Naive thymus-derived CD4-positive, alpha-beta T cell (primary cell): ENCODE measurements at regions of chr10 and their contacts with region 1.

Region 1: GRCh38 chr10:27558612-27559020 is 54.5 kb downstream of the RAB18 start:
- DNase-seq: peak in 3 of 9 donors; percentile 10 to 25 (median 15)
- ATAC-seq: peak; percentile 63
- H3K4me3 ChIP-seq: no peak overlapping the region
- H3K4me3 Mint-ChIP-seq: no peak overlapping the region
- H3K27ac ChIP-seq: no peak overlapping the region
- H3K27ac Mint-ChIP-seq: peak overlapping the region in 1 of 9 donors; percentile 36
- H3K4me1 ChIP-seq: peaks cover 0 to under 1% of the 10 kb centered on the region in 2 donors
- H3K4me1 Mint-ChIP-seq: peaks cover 0 to 4% (median 0%) of the 10 kb centered on the region in 7 donors
- H3K27me3 ChIP-seq: no peaks in the 10 kb centered on the region
- H3K27me3 Mint-ChIP-seq: peaks cover 0 to 16% (median 0%) of the 10 kb centered on the region in 5 donors

Region 2: DNA sequence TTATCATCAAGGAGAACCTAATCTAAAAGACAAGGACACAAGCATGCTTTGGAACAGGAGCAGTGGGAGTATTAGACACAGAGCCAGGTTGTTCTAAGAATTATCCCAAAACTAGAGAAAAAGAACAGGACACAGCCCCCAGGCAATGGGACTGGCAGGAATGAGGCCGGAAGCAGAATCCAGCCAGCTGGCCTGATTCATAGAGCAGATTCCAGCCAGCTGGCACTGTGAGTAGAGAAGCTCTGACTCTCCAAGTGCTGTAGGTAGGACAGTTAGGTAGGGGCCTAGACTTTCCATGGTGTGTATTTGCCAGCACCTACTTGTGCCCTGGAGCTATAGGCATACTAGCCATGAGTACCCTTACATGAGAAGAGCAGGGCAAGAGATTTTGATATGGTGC is 67.8 kb before region 1 on chr10:
- CTCF ChIA-PET with region 1: no interaction called
- POLR2A ChIA-PET with region 1: no interaction called
- intact Hi-C with region 1: no loop called
- DNase-seq: no peak
- ATAC-seq: no peak
- H3K4me3 ChIP-seq: no peak overlapping the region
- H3K4me3 Mint-ChIP-seq: no peak overlapping the region
- H3K27ac ChIP-seq: no peak overlapping the region
- H3K27ac Mint-ChIP-seq: no peak overlapping the region
- H3K4me1 ChIP-seq: no peaks in the 10 kb centered on the region
- H3K4me1 Mint-ChIP-seq: peaks cover 0 to 3% (median 0%) of the 10 kb centered on the region in 7 donors
- H3K27me3 ChIP-seq: peaks cover 0 to 3% of the 10 kb centered on the region in 2 donors
- H3K27me3 Mint-ChIP-seq: peaks cover 21 to 65% (median 32%) of the 10 kb centered on the region in 5 donors

Region 3: DNA sequence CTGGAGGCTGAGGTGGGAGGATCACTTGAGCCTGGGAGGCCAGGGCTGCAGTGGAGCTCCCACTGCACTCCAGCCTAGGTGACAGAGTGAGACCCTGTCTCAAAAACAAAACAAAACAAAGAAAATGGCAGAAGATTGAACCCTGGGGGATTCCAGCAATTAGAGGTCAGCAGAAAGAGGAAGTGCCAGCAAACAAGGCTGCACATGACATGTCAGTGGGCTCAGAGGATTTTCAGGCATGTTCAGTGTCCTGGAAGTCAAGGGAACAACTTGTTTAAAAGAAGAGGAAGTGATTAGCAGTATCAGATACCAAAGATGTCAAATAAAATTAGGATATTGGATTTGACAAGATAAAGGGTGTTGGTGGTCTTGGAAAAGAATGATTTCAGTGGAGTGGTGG is 22.2 kb before region 1 on chr10:
- CTCF ChIA-PET with region 1: no interaction called
- POLR2A ChIA-PET with region 1: no interaction called
- intact Hi-C with region 1: loop called in 1 of 2 experiments (anchors 2 kb)
- DNase-seq: no peak
- ATAC-seq: no peak
- H3K4me3 ChIP-seq: no peak overlapping the region
- H3K4me3 Mint-ChIP-seq: no peak overlapping the region
- H3K27ac ChIP-seq: no peak overlapping the region
- H3K27ac Mint-ChIP-seq: no peak overlapping the region
- H3K4me1 ChIP-seq: peaks cover 0 to 7% of the 10 kb centered on the region in 2 donors
- H3K4me1 Mint-ChIP-seq: peaks cover 4 to 26% (median 15%) of the 10 kb centered on the region in 7 donors
- H3K27me3 ChIP-seq: no peaks in the 10 kb centered on the region
- H3K27me3 Mint-ChIP-seq: no peaks in the 10 kb centered on the region

Region 4: DNA sequence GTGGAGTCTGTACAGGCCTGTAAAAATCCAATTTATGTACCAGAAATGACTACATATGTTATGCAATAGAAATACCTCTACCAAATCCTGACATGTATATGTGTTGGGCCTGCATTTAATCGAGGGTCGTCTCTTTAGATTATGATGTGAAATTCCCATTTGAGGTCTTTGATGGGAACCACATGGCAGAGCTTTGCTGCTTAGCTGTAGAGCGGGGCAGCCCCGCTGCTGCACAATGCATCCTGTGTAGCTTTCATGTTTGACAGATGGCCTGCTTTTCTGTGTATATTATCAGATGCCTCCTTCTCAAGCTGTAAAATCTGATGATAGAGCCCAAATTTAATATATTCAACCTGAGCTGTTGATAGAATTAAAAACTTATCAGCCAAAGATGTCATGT is 11.3 kb after region 1 on chr10:
- CTCF ChIA-PET with region 1: no interaction called
- POLR2A ChIA-PET with region 1: no interaction called
- intact Hi-C with region 1: no loop called
- DNase-seq: no peak
- ATAC-seq: no peak
- H3K4me3 ChIP-seq: no peak overlapping the region
- H3K4me3 Mint-ChIP-seq: no peak overlapping the region
- H3K27ac ChIP-seq: no peak overlapping the region
- H3K27ac Mint-ChIP-seq: peak overlapping the region in 1 of 9 donors; percentile 3
- H3K4me1 ChIP-seq: peaks cover 0 to 19% of the 10 kb centered on the region in 2 donors
- H3K4me1 Mint-ChIP-seq: peaks cover 4 to 28% (median 15%) of the 10 kb centered on the region in 7 donors
- H3K27me3 ChIP-seq: no peaks in the 10 kb centered on the region
- H3K27me3 Mint-ChIP-seq: peaks cover 0 to 2% (median 0%) of the 10 kb centered on the region in 5 donors

Region 5: GRCh38 chr10:27637362-27637964 is 78.8 kb after region 1 on chr10:
- CTCF ChIA-PET with region 1: no interaction called
- POLR2A ChIA-PET with region 1: no interaction called
- intact Hi-C with region 1: no loop called
- DNase-seq: no peak
- ATAC-seq: no peak
- H3K4me3 ChIP-seq: no peak overlapping the region
- H3K4me3 Mint-ChIP-seq: no peak overlapping the region
- H3K27ac ChIP-seq: no peak overlapping the region
- H3K27ac Mint-ChIP-seq: no peak overlapping the region
- H3K4me1 ChIP-seq: no peaks in the 10 kb centered on the region
- H3K4me1 Mint-ChIP-seq: no peaks in the 10 kb centered on the region
- H3K27me3 ChIP-seq: no peaks in the 10 kb centered on the region
- H3K27me3 Mint-ChIP-seq: peaks cover 0 to 13% (median 0%) of the 10 kb centered on the region in 5 donors